Common myeloid progenitor, CD34-positive (primary cell): ENCODE measurements at regions of chr2 and their contacts with region 1.

Region 1: DNA sequence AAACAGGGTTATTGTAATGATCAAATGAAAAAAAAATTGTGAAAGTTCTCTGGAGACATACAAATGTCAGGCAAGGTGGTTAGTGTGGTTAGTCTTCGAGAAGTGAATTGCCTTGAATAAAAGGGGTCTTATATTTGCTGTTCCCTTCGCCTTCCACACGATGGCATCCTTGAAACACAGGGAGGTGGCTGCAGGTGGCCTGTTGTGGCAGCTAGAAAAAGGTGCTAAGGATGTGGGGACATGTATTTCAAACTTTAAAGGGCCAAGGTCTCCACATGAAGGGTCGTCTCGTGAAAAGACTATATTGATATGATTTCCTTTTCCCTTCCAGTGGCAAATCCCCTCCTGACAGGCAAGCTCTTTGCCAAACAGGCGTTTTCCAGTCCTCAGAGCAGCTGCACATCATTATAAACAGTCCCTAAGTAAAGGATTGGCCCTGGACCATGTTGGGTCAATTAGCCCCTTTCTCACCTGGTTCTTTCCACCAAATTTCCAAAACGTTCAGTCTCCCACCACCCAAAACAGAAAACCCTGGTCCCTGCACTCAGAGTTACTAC is 68.5 kb downstream of the COPS8 start:
- DNase-seq: peak; percentile 69 to 82 (median 79)
- H3K4me3 ChIP-seq: no peak overlapping the region
- H3K27ac ChIP-seq: no peak overlapping the region
- H3K4me1 ChIP-seq: peaks cover 6 to 14% (median 9%) of the 10 kb centered on the region in 4 experiments
- H3K27me3 ChIP-seq: peaks cover 0 to 24% (median 6%) of the 10 kb centered on the region in 5 experiments

Region 2: DNA sequence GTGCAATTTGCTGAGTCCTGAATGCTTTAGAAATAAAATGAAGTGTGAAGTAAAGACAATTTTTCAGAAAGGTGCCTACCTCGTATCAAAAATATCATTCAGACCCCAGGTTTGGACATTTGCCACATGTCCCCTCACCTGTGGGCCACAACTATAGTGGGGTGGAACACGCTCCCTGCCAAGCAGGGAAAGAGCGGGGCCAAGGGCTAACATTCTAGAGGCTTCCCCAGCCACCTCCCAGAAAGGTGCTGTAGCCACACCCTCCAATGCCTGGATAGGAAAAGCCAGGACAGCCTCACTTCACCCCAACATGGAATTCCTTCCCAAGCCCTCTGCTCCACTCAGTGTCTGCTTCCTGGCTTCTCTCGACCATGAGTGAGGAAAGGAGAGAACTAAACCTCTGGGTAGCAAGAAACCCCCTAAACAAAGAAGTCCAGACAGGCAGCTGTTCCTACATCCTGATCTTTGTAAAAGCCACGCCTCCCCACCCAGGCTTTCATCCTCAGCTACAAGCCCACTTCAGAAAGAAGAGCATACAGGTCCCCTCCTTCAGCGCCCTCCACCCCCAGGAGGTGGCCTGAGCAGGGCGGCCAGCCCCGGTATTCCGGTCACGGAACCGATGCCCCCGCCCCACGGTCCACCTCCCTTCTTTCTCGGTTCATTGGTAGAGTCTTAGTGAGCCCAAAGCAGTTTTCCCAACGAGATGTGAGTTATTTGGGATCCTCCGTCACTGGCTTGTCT is 257.7 kb after region 1 on chr2:
- CTCF ChIA-PET with region 1: interaction called, 14 read pairs
- POLR2A ChIA-PET with region 1: no interaction called
- DNase-seq: no peak
- H3K4me3 ChIP-seq: no peak overlapping the region
- H3K27ac ChIP-seq: no peak overlapping the region
- H3K4me1 ChIP-seq: no peaks in the 10 kb centered on the region
- H3K27me3 ChIP-seq: peaks cover 0 to 17% (median 0%) of the 10 kb centered on the region in 5 experiments